Left lung (tissue), 14 donors: ENCODE measurements at regions of chr5 and their contacts with region 1.

Region 1: GRCh38 chr5:67149951-67150523 is 46.6 kb downstream of the CD180 start:
- DNase-seq: peak in 1 of 4 donors; percentile 37
- ATAC-seq: no peak
- H3K4me3 ChIP-seq: no peak overlapping the region
- H3K27ac ChIP-seq: no peak overlapping the region
- H3K4me1 ChIP-seq: peaks cover 0 to 5% of the 10 kb centered on the region in 2 donors
- H3K27me3 ChIP-seq: no peaks in the 10 kb centered on the region
- CTCF ChIP-seq: peak in 1 of 2 donors; percentile 35

Region 2: GRCh38 chr5:66814146-66814991 is 335.7 kb before region 1 on chr5:
- intact Hi-C with region 1: no loop called
- DNase-seq: no peak
- ATAC-seq: peak; percentile 65
- H3K4me3 ChIP-seq: no peak overlapping the region
- H3K27ac ChIP-seq: no peak overlapping the region
- H3K4me1 ChIP-seq: no peaks in the 10 kb centered on the region
- H3K27me3 ChIP-seq: no peaks in the 10 kb centered on the region
- CTCF ChIP-seq: peak; percentile 55 to 77

Region 3: DNA sequence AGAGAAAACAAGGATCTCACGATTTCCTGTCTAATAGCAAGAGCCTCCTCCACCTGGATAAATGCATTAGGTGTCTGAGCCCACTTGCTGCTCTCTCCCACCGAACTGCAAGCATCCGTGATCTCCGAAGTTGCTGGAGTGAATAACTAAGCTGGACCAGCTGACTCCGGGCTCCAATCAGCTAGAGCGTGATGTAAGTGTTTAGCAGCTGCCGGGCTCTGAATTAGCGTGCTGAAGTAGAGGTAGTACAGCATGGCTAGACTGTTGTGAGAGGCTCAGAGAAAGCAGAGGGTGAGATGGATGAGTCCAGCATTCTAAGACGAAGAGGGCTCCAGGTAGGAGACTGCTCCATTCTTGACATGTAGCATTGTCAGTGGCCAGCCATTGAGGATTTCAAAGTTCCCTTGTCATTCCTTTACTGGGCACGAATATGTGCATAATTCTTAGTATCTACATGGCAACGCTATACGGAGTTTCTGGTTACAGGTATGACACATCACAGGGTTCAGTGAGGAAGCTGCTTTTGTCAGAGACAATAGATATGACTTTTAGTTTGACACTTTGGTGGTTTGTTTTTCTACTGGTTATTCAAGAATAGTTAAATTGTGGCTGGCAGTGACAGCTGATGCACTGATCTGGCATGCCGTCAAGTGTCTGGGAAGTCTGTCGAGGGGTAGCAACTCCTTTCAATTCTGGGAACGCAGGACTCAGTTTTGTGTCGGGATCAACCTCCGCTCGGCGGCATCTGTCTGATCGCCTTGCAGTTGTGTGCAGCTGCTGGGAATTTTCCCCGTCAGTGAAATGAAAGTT is 321.3 kb before region 1 on chr5:
- intact Hi-C with region 1: loop called in 1 of 2 experiments (anchors 10 kb)
- DNase-seq: peak in 3 of 4 donors; percentile 71 to 93 (median 72)
- ATAC-seq: peak; percentile 88
- H3K4me3 ChIP-seq: peak overlapping the region; percentile 30 to 35
- H3K27ac ChIP-seq: peak overlapping the region; percentile 63 to 64
- H3K4me1 ChIP-seq: peaks cover 0 to 31% of the 10 kb centered on the region in 2 donors
- H3K27me3 ChIP-seq: peaks cover 0 to 11% of the 10 kb centered on the region in 2 donors
- CTCF ChIP-seq: no peak

Region 4: DNA sequence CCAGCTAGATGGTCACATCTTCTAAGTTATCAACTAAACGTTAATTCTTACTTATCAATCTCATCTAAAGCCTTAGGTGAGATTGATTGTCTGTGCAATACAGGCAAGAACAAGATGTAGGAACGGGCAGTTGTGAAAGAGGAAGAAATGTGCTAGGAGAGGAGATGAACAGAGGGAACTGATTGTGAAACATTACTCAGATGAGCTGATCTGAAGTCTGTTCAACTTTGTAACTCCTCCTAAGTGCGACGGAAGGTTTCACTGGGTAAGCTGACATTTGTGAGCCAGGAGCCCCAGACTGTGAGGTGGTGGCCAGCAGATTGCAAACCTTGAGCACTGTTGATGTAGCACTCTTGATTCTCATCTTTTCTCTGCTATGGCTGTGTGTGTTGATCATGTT is 157.5 kb before region 1 on chr5:
- intact Hi-C with region 1: loop called in 1 of 2 experiments (anchors 10 kb)
- DNase-seq: no peak
- ATAC-seq: peak; percentile 33
- H3K4me3 ChIP-seq: no peak overlapping the region
- H3K27ac ChIP-seq: no peak overlapping the region
- H3K4me1 ChIP-seq: peaks cover 0 to 7% of the 10 kb centered on the region in 2 donors
- H3K27me3 ChIP-seq: no peaks in the 10 kb centered on the region
- CTCF ChIP-seq: no peak